Activated T-helper 1 cell treated with anti-CD3 and anti-CD28 coated beads, Interleukin-12 subunit alpha, Interleukin-12 subunit beta, Interleukin-2, Interleukin-4 antibody, amounts not matched to agents 30 ng/mL and 10 ng/mL and 1 ng/mL, durations not matched to agents 14 hours and 24 hours and 36 hours (primary cell): ENCODE measurements at regions of chr2 and their contacts with region 1.

Region 1: GRCh38 chr2:176914371-176914770 is 298.2 kb upstream of the HNRNPA3 start:
- DNase-seq: no peak
- H3K4me3 Mint-ChIP-seq: no peak overlapping the region
- H3K27ac Mint-ChIP-seq: no peak overlapping the region
- H3K4me1 Mint-ChIP-seq: peaks cover 17% of the 10 kb centered on the region
- H3K27me3 Mint-ChIP-seq: peaks cover 6% of the 10 kb centered on the region

Region 2: DNA sequence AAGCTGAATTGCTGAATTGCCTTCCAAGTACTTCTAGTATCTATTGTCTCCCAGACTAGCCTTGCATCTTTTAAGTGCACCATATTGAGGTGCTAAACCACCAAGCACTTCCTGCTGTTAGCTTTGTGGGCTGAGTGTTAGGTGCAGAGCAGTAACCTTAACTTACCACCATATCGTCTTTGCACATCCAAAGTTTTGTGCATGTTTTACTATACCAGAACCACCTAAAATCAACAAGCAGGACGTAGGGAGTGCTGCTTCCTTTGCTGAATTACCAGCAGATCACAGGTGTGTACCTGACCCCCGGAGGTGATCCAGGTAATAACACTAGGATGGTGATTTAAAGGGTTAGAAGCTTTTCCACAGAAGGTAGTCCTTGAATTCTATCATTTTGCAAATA is 61.7 kb before region 1 on chr2:
- intact Hi-C with region 1: no loop called
- DNase-seq: peak; percentile 56
- H3K4me3 Mint-ChIP-seq: no peak overlapping the region
- H3K27ac Mint-ChIP-seq: peak overlapping the region; percentile 9
- H3K4me1 Mint-ChIP-seq: peaks cover 56% of the 10 kb centered on the region
- H3K27me3 Mint-ChIP-seq: peaks cover 4% of the 10 kb centered on the region

Region 3: GRCh38 chr2:176892676-176893226 is 21.6 kb before region 1 on chr2:
- intact Hi-C with region 1: loop called (anchors 1 kb)
- DNase-seq: no peak
- H3K4me3 Mint-ChIP-seq: no peak overlapping the region
- H3K27ac Mint-ChIP-seq: no peak overlapping the region
- H3K4me1 Mint-ChIP-seq: no peaks in the 10 kb centered on the region
- H3K27me3 Mint-ChIP-seq: peaks cover 2% of the 10 kb centered on the region